ENCODE measurements at regions of chr13 and their contacts with region 1.

Region 1: DNA sequence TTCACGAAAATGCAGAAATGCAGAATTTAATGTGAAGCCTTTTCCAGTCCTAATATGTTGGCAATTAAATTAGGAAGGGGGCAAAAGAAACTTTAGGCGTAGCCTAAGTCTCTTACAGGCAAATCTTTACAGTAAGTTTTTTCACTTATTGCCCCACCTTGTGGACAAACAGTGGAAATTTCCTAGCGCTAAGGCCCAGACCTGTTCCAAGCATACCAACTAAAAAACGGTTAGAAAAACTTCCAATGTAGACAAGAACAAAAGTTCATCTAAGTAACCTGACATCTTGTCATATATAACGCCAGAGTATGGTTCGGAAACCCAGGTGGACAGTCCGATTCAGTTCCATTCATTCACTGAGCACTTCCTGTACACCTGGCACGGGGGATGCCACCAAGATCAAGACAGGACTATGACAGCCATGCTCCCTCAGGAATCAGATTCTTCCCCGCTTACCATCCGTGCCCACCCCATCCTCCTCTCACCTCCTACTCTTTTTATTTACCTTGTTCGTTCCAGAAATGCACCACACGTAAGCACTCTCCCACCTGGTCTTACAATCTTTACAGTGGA is 4.9 kb downstream of the ZAR1L start:
- DNase-seq: no peak
- H3K4me3 ChIP-seq: peak overlapping the region in 2 of 4 donors; percentile 2 to 40
- H3K27ac ChIP-seq: peak overlapping the region in 3 of 4 donors; percentile 23 to 43 (median 35)
- H3K4me1 ChIP-seq: peaks cover 0 to 15% (median 8%) of the 10 kb centered on the region in 4 donors
- H3K27me3 ChIP-seq: no peaks in the 10 kb centered on the region
- CTCF ChIP-seq: peak; percentile 69 to 88 (median 72)
- EP300 ChIP-seq: no peak
- POLR2A ChIP-seq: no peak

Region 2: GRCh38 chr13:32025730-32026129 is 284.5 kb before region 1 on chr13:
- in situ Hi-C with region 1: loop called in 3 of 4 experiments (anchors 10 to 25 kb)
- intact Hi-C with region 1: loop called (anchors 5 kb)
- DNase-seq: no peak
- H3K4me3 ChIP-seq: no peak overlapping the region
- H3K27ac ChIP-seq: no peak overlapping the region
- H3K4me1 ChIP-seq: peaks cover 0 to 5% (median 0%) of the 10 kb centered on the region in 4 donors
- H3K27me3 ChIP-seq: peaks cover 6% of the 10 kb centered on the region
- CTCF ChIP-seq: no peak
- EP300 ChIP-seq: no peak
- POLR2A ChIP-seq: no peak

Measured in transverse colon (tissue), 4 donors.